ENCODE measurements at regions of chr15 and their contacts with region 1.

Region 1: GRCh38 chr15:84929744-84930371 is 45.4 kb downstream of the SLC28A1 start:
- DNase-seq: peak in 5 of 6 donors; percentile 36 to 82 (median 59)
- ATAC-seq: peak; percentile 29 to 81 (median 66)
- H3K4me3 ChIP-seq: no peak overlapping the region
- H3K27ac ChIP-seq: peak overlapping the region in 1 of 4 donors; percentile 22
- H3K4me1 ChIP-seq: peaks cover 0 to 7% (median 0%) of the 10 kb centered on the region in 3 donors
- H3K27me3 ChIP-seq: no peaks in the 10 kb centered on the region
- CTCF ChIP-seq: no peak

Region 2: DNA sequence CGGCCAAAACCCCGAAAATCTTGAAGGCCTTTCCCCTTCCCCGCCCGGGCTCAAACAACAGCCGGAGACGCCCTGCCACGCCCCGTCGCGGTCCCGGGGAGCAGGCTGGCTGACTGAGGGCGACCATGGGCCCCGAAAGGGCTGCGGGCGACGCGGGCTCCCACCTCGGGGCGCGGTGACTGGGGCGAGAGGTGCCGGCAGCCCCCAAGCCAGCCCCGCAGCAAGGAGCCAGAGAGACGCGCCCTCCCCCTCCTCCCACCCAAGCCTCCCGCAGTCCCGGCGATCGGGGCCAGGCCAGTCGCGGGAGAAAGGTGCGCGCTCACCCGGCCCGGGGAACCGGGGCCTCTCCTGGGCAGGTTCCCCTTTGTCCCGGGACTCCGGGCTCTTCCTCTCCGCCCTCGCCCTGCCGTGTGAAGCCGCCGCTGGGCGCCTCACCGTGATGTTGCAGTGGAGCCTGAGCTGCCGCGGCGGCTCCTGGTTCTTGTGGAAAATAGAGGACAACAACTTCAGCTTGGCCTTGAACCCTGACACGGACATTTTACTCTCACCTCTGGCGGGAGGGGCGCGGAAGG is 359.6 kb before region 1 on chr15:
- intact Hi-C with region 1: loop called in 1 of 3 experiments (anchors 10 kb)
- DNase-seq: peak; percentile 44 to 84 (median 62)
- ATAC-seq: peak; percentile 67 to 83 (median 77)
- H3K4me3 ChIP-seq: peak overlapping the region; percentile 53 to 74 (median 71)
- H3K27ac ChIP-seq: peak overlapping the region; percentile 80 to 97 (median 90)
- H3K4me1 ChIP-seq: peaks cover 0 to 7% (median 4%) of the 10 kb centered on the region in 3 donors
- H3K27me3 ChIP-seq: no peaks in the 10 kb centered on the region
- CTCF ChIP-seq: no peak

Region 3: DNA sequence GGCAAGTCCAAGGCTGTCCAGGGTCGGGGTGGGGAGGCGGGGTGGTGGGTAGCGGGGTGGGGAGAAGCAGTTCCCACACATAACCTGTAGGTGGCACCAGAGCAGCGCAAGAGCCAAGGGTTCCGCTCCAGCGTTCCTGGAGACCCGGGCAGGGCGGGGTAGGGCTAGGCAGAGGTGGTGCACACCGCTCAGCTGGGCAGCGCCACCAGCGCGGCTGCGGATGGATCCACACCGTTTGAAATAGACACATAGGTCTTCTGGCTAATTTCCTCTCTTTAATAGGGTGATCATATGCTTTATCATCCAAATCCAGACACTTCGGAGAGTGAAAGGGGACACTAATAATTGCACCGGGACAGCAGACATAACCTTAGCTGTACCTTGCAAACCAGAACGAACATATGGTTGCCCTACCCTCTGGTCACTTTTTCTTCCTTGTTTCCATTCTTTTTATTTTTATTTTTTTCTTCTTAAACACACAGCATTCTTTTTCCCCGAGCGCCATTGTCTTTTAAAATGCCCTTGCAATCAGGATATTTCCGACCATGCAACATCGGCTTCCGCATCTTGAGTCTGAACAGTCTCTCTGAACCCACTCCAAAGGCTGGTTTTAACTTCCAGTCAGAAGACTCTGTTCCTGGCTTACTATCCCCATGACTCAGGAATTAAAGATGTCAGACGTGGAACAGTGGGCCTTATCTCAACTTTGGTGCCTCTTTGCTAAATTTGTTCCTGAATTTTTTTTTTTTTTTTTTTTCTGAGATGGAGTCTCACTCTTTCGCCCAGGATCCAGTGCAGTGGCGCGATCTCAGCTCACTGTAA is 341.6 kb before region 1 on chr15:
- intact Hi-C with region 1: loop called in 1 of 3 experiments (anchors 10 kb)
- DNase-seq: peak; percentile 87 to 96 (median 92)
- ATAC-seq: peak; percentile 97 to 100 (median 100)
- H3K4me3 ChIP-seq: peak overlapping the region in 2 of 4 donors; percentile 38 to 41
- H3K27ac ChIP-seq: no peak overlapping the region
- H3K4me1 ChIP-seq: no peaks in the 10 kb centered on the region
- H3K27me3 ChIP-seq: no peaks in the 10 kb centered on the region
- CTCF ChIP-seq: peak; percentile 86 to 92 (median 88)

Region 4: DNA sequence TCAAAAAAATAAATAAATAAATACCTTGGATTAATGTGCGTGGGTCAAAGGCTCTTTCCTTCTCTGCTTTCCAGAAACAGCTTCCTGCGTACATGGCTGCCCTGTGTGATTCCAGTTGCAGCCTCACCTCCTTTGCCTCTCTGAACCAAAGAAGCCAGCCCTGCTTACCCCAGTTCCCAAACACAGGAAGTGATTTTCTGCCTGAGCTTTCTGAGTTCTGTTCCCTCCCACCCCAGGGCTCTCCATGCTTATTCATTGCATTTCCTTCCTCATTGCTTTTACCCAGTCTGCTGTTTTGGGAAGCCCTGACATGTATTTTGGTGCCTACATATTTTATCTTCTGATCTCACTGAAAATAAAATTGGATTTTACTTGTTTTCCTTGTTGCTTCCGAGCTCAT is 313.6 kb before region 1 on chr15:
- intact Hi-C with region 1: no loop called
- DNase-seq: peak in 1 of 6 donors; percentile 15
- ATAC-seq: peak in 3 of 4 donors; percentile 18 to 69 (median 35)
- H3K4me3 ChIP-seq: no peak overlapping the region
- H3K27ac ChIP-seq: no peak overlapping the region
- H3K4me1 ChIP-seq: no peaks in the 10 kb centered on the region
- H3K27me3 ChIP-seq: no peaks in the 10 kb centered on the region
- CTCF ChIP-seq: no peak

Region 5: DNA sequence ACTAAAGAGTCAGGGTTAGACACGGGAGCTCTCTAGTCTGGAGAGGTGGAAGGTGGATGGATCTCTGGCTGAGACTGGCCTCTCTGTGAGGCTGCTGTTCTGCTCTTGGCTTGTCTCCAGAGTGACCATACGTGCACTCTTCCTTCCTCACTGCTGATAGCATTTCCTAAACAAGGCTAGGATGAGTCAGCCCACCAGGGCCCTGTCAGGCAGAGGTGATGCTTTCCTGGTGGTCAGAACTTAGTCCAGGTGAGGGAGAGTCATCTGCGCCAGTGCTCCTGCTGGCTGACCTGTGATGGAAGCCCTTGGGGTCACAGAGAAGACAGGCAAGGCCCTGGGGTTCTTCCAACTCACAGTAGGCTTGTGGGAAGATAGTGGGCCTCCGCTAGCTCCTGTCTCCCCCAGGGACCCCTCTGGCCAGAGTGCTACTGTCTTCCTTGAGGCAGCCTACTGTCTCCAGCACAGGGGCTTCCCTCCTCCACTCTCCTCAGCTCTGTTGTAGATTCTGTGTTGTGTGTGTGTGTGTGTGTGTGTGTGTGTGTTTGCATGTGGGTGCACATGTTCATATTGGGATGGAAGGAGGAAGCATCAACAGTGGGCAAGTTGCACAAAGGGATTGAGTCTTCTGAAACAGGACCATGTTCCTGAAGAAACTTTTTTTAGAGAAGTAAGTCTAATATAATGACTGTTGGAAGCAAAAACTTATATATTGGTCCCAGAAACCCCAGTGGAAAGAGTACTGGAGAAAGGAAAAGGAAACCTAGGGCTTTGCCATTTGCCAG is 96.2 kb before region 1 on chr15:
- intact Hi-C with region 1: loop called in 1 of 3 experiments (anchors 10 kb)
- DNase-seq: no peak
- ATAC-seq: peak in 2 of 4 donors; percentile 30 to 43
- H3K4me3 ChIP-seq: no peak overlapping the region
- H3K27ac ChIP-seq: no peak overlapping the region
- H3K4me1 ChIP-seq: peaks cover 0 to 4% (median 0%) of the 10 kb centered on the region in 3 donors
- H3K27me3 ChIP-seq: no peaks in the 10 kb centered on the region
- CTCF ChIP-seq: no peak

Region 6: DNA sequence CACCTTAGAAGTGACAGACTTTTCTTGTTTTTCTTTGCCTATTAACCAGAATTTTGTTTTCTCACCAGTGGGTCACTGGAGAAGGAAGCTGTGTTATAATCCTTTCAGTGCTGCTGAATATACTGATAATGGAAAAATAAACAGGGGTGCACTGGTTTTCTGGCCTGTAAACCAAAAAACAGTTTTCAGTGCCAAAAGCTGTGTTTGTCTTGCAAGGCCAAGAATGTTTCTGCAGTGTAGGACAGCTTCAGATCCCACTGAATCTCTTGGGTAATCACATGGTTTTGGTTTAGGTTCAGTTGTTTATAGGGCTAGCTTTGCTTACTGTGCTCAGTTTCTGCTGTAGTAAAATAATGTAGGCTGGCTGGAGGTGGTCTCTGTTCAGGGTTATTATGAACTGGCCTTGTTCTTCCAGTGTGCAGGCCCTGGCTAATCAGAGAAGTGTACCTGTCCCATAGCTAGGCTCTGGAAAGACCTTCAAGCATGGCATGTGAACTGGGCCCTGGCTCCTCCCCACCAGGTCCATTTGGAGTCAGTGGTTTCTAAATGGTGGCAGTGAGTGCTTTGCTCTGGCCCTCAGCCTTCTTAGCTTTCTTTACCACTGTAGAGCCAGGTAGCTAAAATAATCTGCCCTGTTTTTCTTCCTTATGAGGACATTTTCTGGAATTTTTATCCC is 70.5 kb after region 1 on chr15:
- intact Hi-C with region 1: no loop called
- DNase-seq: no peak
- ATAC-seq: peak; percentile 36 to 74 (median 60)
- H3K4me3 ChIP-seq: no peak overlapping the region
- H3K27ac ChIP-seq: peak overlapping the region in 3 of 4 donors; percentile 12 to 63 (median 61)
- H3K4me1 ChIP-seq: peaks cover 17 to 24% (median 18%) of the 10 kb centered on the region in 3 donors
- H3K27me3 ChIP-seq: no peaks in the 10 kb centered on the region
- CTCF ChIP-seq: no peak

Measured in pancreas (tissue), 10 donors.